Endothelial cell of umbilical vein (primary cell): ENCODE measurements at regions of chr2 and their contacts with region 1.

Region 1: GRCh38 chr2:238847841-238848690 is at the start of gene TWIST2:
- DNase-seq: peak; percentile 50
- H3K4me3 ChIP-seq: peak within 1 kb of the TSS; percentile 35 to 61 (median 59)
- H3K27ac ChIP-seq: no peak within 1 kb of the TSS
- H3K4me1 ChIP-seq: peaks cover 4% of the 10 kb centered on the region
- H3K27me3 ChIP-seq: peaks cover 14 to 31% of the 10 kb centered on the region in 2 experiments
- CTCF ChIP-seq: no peak
- POLR2A ChIP-seq: no peak
- total RNA-seq, gene TWIST2: 1.2 and 2.3 TPM in 2 replicates

Region 2: DNA sequence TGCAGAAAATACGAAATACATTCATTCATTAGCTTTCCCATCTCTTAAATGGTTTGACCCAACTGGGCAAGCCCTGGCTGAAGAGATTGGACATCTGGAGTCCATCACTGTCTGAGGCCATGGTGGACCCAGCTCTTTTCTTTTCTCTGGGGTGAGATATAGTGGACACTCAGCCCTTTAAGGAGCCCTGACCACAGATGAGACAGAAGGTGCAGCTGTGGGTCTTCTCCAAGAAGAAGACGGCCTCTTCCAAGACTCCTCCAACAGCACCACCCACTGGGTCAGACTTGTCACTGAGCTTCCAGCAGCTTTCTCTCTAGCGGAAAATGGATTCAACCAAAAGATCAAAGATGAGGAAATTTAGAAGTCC is 27.0 kb after region 1 on chr2:
- CTCF ChIA-PET with region 1: interaction called, 14 read pairs
- POLR2A ChIA-PET with region 1: no interaction called
- dilution Hi-C with region 1: no loop called
- intact Hi-C with region 1: no loop called
- DNase-seq: no peak
- H3K4me3 ChIP-seq: no peak overlapping the region
- H3K27ac ChIP-seq: no peak overlapping the region
- H3K4me1 ChIP-seq: no peaks in the 10 kb centered on the region
- H3K27me3 ChIP-seq: no peaks in the 10 kb centered on the region
- CTCF ChIP-seq: no peak
- POLR2A ChIP-seq: no peak

Region 3: GRCh38 chr2:238895891-238896600 is 48.0 kb after region 1 on chr2:
- CTCF ChIA-PET with region 1: no interaction called
- POLR2A ChIA-PET with region 1: no interaction called
- dilution Hi-C with region 1: no loop called
- intact Hi-C with region 1: loop called (anchors 1 kb)
- DNase-seq: peak; percentile 81
- H3K4me3 ChIP-seq: no peak overlapping the region
- H3K27ac ChIP-seq: peak overlapping the region; percentile 30
- H3K4me1 ChIP-seq: peaks cover 12% of the 10 kb centered on the region
- H3K27me3 ChIP-seq: no peaks in the 10 kb centered on the region
- CTCF ChIP-seq: no peak
- POLR2A ChIP-seq: no peak

Region 4: GRCh38 chr2:238945433-238946150 is 97.5 kb after region 1 on chr2:
- CTCF ChIA-PET with region 1: interaction called, 13 read pairs
- POLR2A ChIA-PET with region 1: no interaction called
- dilution Hi-C with region 1: no loop called
- intact Hi-C with region 1: no loop called
- DNase-seq: peak; percentile 65
- H3K4me3 ChIP-seq: no peak overlapping the region
- H3K27ac ChIP-seq: no peak overlapping the region
- H3K4me1 ChIP-seq: no peaks in the 10 kb centered on the region
- H3K27me3 ChIP-seq: no peaks in the 10 kb centered on the region
- CTCF ChIP-seq: peak; percentile 62 to 91
- POLR2A ChIP-seq: no peak